Activated CD4-positive, alpha-beta memory T cell treated with anti-CD3 and anti-CD28 coated beads, Interleukin-2, amount 10 ng/mL, durations not matched to agents 7 days and 5 days (primary cell): ENCODE measurements at regions of chr2 and their contacts with region 1.

Region 1: DNA sequence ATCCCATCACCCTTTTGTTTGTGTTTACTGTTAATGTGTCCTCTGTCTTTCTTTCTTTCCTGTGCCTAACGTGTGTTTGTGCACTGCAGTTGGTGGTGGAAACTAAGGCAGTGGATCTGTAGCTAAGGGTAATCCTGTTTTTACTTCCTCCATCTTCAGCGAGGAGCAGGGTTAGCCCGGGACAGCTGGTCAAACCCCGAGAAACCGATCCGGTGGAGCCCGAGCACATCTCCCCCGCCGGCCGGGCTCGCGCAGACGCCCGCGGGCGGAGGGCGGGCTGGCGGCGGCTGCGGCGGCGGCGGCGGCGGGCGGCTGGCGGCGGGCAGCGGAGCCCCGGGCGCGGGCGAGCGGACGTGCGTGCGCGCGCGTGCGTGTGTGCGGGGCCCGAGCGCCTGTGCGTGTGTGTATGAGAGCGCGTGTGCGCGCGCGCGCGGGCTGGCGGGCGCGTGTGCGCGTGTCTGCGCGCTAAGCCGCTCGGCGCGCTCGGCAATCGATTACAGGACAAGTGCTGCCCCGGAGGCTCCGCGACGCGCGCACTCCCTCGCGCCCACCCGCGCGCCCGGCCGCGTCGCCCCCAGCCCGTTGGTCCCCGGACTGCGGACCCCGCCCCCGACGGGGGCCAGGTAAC is at the start of gene IKZF2:
- DNase-seq: peak; percentile 63
- H3K4me3 Mint-ChIP-seq: peak within 1 kb of the TSS; percentile 79
- H3K27ac Mint-ChIP-seq: peak within 1 kb of the TSS; percentile 60
- H3K4me1 Mint-ChIP-seq: peaks cover 30% of the 10 kb centered on the region
- H3K27me3 Mint-ChIP-seq: peaks cover 47% of the 10 kb centered on the region
- total RNA-seq, gene IKZF2: 4.2 to 6.0 TPM

Region 2: GRCh38 chr2:212777020-212777491 is 374.5 kb before region 1 on chr2:
- CTCF ChIA-PET with region 1: interaction called, 33 read pairs
- POLR2A ChIA-PET with region 1: interaction called, 3 read pairs
- DNase-seq: no peak
- H3K4me3 Mint-ChIP-seq: no peak overlapping the region
- H3K27ac Mint-ChIP-seq: no peak overlapping the region
- H3K4me1 Mint-ChIP-seq: no peaks in the 10 kb centered on the region
- H3K27me3 Mint-ChIP-seq: no peaks in the 10 kb centered on the region

Region 3: DNA sequence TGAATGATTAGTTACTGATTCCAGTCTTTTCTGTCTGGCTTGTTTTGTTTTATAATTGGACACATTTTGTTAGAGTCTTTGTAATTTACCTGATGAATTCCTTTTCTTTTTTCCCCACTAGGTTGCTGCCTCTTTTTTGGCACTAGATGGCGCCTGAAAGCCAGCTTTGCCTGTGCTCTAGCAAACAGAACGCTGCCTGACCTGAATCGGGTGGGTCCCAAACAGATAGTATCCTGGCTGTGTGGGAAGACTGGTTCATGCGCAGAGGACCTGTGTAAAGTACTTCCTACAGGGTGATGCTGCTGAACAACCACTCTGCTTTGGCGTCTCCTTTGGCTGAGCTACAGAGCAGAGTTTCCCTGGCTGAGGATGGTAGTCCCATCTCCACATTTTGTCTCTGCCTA is 288.4 kb before region 1 on chr2:
- CTCF ChIA-PET with region 1: interaction called, 11 read pairs
- POLR2A ChIA-PET with region 1: no interaction called
- DNase-seq: peak; percentile 20
- H3K4me3 Mint-ChIP-seq: no peak overlapping the region
- H3K27ac Mint-ChIP-seq: no peak overlapping the region
- H3K4me1 Mint-ChIP-seq: no peaks in the 10 kb centered on the region
- H3K27me3 Mint-ChIP-seq: no peaks in the 10 kb centered on the region

Region 4: GRCh38 chr2:213644927-213645326 is 493.4 kb after region 1 on chr2:
- CTCF ChIA-PET with region 1: no interaction called
- POLR2A ChIA-PET with region 1: no interaction called
- DNase-seq: no peak
- H3K4me3 Mint-ChIP-seq: no peak overlapping the region
- H3K27ac Mint-ChIP-seq: no peak overlapping the region
- H3K4me1 Mint-ChIP-seq: no peaks in the 10 kb centered on the region
- H3K27me3 Mint-ChIP-seq: no peaks in the 10 kb centered on the region